ENCODE measurements at regions of chr2 and their contacts with region 1.

Region 1: GRCh38 chr2:68391099-68391498 is 26.0 kb downstream of the PLEK start:
- DNase-seq: no peak
- H3K4me3 ChIP-seq: no peak overlapping the region
- H3K27ac ChIP-seq: peak overlapping the region in 48 of 59 donors; percentile 3 to 85 (median 61)
- H3K27me3 ChIP-seq: no peaks in the 10 kb centered on the region
- CTCF ChIP-seq: no peak

Region 2: DNA sequence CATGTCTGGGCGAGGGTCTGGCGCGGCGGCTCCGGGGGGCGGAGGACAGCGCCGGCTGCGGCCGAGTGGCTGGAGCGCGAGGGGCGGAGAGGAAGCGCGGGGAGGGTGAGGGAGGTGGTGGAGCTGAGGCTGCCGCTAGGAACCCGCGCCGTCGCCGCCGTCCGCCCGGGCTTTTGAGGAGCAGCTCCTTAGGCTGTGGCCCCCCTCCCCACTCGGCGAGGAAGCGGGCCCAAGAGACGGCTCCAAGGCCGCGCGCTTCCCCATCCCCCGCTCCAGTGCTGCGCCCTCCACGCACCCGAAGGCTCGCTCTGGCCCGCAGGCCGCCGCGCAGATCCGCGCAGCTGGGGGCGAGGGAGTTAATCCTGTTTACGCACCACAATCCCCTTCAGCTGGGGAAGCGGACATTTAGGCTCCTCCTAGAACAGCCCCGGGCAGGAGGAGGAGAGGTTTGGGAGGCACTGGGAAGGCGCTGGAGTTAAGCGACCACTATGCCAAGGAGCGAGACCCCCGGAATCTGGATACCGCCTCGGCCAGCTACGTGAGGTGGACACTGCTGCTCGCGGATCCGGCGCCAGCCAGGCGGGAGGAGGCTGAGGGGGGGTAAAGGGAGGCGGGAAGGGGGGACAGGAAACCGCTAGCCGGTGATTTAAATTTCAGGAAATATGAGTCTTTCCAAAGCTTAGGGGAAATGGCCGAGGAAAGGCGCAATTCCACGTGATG is 71.5 kb before region 1 on chr2 and contains the start of gene CNRIP1:
- intact Hi-C with region 1: loop called in 1 of 2 experiments (anchors 2 kb)
- DNase-seq: peak; percentile 47 to 78 (median 69)
- H3K4me3 ChIP-seq: peak within 1 kb of the TSS; percentile 67 to 97 (median 87)
- H3K27ac ChIP-seq: peak within 1 kb of the TSS; percentile 64 to 99 (median 96)
- H3K27me3 ChIP-seq: no peaks in the 10 kb centered on the region
- CTCF ChIP-seq: peak in 6 of 56 donors; percentile 2 to 29 (median 12)
- total RNA-seq, gene CNRIP1: 48.6 to 133 (median 99.0) TPM

Region 3: GRCh38 chr2:68516051-68516955 is 125.2 kb after region 1 on chr2:
- intact Hi-C with region 1: no loop called
- DNase-seq: no peak
- H3K4me3 ChIP-seq: no peak overlapping the region
- H3K27ac ChIP-seq: no peak overlapping the region
- H3K27me3 ChIP-seq: no peaks in the 10 kb centered on the region
- CTCF ChIP-seq: no peak